ENCODE measurements at regions of chr2 and their contacts with region 1.

Region 1: DNA sequence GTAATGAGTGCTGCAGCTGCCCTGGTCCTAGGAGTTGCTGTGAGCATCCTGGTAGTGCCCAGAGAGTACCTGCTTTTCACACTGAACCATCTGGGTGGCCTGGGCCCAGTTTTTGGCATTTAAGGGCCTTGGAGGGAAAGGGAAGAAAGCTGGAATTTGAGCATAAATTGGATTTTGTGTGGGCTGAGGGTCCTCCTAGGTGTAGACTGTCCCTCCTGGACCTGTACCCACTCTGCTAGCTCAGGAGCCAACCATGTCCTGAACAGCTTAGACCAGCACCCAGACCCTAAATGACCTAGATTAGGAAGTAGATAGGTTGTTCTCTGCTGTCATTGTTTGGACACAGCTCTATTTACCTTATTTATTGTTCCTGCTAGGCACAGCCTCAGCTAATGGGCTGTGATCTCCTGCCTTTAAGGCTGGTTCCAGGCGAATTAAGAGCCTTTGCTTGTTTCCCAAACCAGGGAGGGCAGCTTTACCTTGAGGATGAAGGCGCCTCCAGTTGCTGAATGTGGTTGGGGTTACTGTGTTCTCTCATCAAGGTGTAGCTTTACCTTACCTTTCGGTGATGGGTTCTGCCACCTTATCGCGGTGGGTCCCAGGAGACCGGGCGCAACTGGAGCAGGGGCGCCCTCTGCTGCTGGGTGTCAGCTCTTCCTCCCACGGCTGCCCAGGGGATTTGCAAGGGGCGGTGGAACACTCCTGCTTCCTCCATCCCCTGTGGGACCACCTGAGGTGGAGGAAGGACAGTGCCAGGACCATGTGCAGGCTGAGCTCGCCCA is 34.4 kb downstream of the ITGA6 start:
- DNase-seq: peak; percentile 93
- H3K4me3 ChIP-seq: peak overlapping the region in 3 of 8 donors; percentile 6 to 50 (median 11)
- H3K27ac ChIP-seq: peak overlapping the region in 6 of 8 donors; percentile 41 to 84 (median 72)
- H3K4me1 ChIP-seq: peaks cover 41 to 90% (median 66%) of the 10 kb centered on the region in 6 donors
- H3K27me3 ChIP-seq: no peaks in the 10 kb centered on the region
- CTCF ChIP-seq: peak; percentile 56 to 91 (median 84)
- POLR2A ChIP-seq: no peak

Region 2: GRCh38 chr2:172172513-172173173 is 289.1 kb before region 1 on chr2:
- intact Hi-C with region 1: loop called (anchors 2 kb)
- DNase-seq: peak; percentile 92
- H3K4me3 ChIP-seq: peak overlapping the region; percentile 47 to 66 (median 50)
- H3K27ac ChIP-seq: peak overlapping the region in 4 of 8 donors; percentile 15 to 65 (median 33)
- H3K4me1 ChIP-seq: peaks cover 0 to 19% (median 12%) of the 10 kb centered on the region in 6 donors
- H3K27me3 ChIP-seq: peaks cover 0 to 31% (median 5%) of the 10 kb centered on the region in 7 donors
- CTCF ChIP-seq: peak; percentile 75 to 86 (median 79)
- POLR2A ChIP-seq: no peak

Region 3: GRCh38 chr2:172293956-172294355 is 167.8 kb before region 1 on chr2:
- intact Hi-C with region 1: no loop called
- DNase-seq: no peak
- H3K4me3 ChIP-seq: no peak overlapping the region
- H3K27ac ChIP-seq: no peak overlapping the region
- H3K4me1 ChIP-seq: no peaks in the 10 kb centered on the region
- H3K27me3 ChIP-seq: peaks cover 0 to 17% (median 0%) of the 10 kb centered on the region in 7 donors
- CTCF ChIP-seq: no peak
- POLR2A ChIP-seq: no peak

Region 4: DNA sequence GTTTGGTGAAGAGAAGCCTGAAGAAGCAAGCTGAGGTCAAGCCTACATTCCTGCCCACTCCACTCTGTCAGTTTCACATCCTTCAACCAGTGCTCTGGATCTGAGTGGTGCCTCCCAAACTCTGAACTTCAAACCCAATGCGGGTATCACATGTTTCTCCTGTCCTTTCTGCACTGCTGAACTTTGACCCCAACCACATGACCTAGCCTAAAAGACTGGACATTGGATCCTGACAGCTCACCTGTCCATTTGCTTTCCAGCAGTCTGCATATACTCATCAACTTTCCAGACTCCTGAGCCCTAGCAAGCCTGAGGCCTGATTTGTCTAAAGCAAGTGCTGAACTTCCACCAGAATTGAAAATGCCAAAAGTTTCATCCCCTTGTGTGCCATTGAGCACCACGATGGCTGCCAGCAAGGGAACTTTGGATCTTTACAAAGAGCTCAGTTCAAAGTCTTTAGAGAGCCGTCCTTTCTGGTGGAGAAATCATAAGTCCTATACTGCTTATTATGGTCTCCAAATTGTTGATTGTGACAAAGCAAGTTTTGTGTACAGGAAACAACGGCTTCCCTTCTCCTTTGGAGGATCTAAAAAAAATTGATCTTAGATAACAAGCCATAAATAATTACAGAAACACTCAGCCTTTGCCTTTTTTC is 72.0 kb before region 1 on chr2:
- intact Hi-C with region 1: no loop called
- DNase-seq: no peak
- H3K4me3 ChIP-seq: no peak overlapping the region
- H3K27ac ChIP-seq: no peak overlapping the region
- H3K4me1 ChIP-seq: no peaks in the 10 kb centered on the region
- H3K27me3 ChIP-seq: no peaks in the 10 kb centered on the region
- CTCF ChIP-seq: no peak
- POLR2A ChIP-seq: no peak

Region 5: GRCh38 chr2:172427256-172427989 is 34.4 kb before region 1 on chr2 and contains the start of gene ITGA6:
- intact Hi-C with region 1: loop called (anchors 5 kb)
- DNase-seq: peak; percentile 93
- H3K4me3 ChIP-seq: peak within 1 kb of the TSS; percentile 63 to 87 (median 81)
- H3K27ac ChIP-seq: peak within 1 kb of the TSS; percentile 73 to 90 (median 84)
- H3K4me1 ChIP-seq: peaks cover 7 to 66% (median 40%) of the 10 kb centered on the region in 6 donors
- H3K27me3 ChIP-seq: peaks cover 0 to 67% (median 0%) of the 10 kb centered on the region in 7 donors
- CTCF ChIP-seq: peak in 6 of 11 experiments; percentile 4 to 49 (median 18)
- POLR2A ChIP-seq: peak in 1 of 3 donors; percentile 63
- total RNA-seq, gene ITGA6: 54.6 to 172 (median 114) TPM

Measured in spleen (tissue), 13 donors.